Activated naive CD4-positive, alpha-beta T cell treated with anti-CD3 and anti-CD28 coated beads, Interleukin-2, amount 10 ng/mL, durations not matched to agents 7 days and 5 days (primary cell): ENCODE measurements at regions of chr3 and their contacts with region 1.

Region 1: GRCh38 chr3:181700168-181701087 is 11.3 kb upstream of the SOX2 start:
- DNase-seq: peak; percentile 67
- H3K4me3 Mint-ChIP-seq: peak overlapping the region; percentile 22
- H3K27ac Mint-ChIP-seq: peak overlapping the region; percentile 17
- H3K4me1 Mint-ChIP-seq: peaks cover 32% of the 10 kb centered on the region
- H3K27me3 Mint-ChIP-seq: peaks cover 90% of the 10 kb centered on the region

Region 2: DNA sequence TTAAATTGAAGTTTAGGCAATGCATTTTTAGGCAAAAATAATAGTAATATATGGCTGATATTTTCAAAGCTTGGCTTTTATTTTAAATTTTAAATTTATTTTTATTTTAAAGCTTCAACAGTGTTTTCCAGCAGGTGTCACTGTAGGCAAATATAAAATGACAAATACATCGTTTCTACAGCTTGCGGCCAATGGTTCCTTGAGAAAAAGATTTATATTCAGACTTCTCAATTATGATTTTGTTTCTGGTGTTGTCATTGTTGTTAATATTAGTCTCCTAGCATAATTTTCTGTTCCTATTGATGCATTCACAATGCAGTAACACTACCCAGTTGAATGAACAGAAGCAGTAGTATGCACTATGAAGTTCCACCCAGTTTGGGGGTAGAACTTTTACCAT is 490.2 kb before region 1 on chr3:
- CTCF ChIA-PET with region 1: interaction called, 18 read pairs
- DNase-seq: no peak
- H3K4me3 Mint-ChIP-seq: no peak overlapping the region
- H3K27ac Mint-ChIP-seq: no peak overlapping the region
- H3K4me1 Mint-ChIP-seq: no peaks in the 10 kb centered on the region
- H3K27me3 Mint-ChIP-seq: peaks cover 4% of the 10 kb centered on the region

Region 3: DNA sequence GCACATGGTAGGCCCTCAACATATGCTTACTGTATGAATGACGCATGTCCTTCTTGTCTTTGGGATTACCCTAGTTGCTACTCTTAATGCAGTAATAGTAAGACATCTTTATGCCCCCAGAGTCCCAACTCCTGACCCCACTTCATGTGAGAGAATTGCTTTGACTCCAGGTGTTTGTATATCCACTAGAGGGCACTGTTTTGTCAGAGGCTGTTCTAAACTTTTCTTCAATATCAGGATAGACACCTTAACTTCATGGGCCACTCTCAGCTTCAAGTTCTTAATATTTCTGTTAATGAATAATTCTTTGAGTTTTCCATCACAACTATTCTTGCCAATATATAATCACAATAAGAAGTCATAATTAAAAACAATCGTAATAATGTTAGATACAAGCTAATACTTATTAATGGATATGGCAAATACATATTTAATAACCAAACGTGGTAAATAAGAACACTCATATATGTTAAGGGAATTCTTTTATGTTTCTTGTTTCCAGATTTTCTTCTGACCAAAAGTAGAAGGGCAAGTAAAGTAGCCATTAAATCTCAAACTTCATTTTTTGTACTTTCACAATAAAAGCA is 373.7 kb before region 1 on chr3:
- CTCF ChIA-PET with region 1: interaction called, 11 read pairs
- DNase-seq: no peak
- H3K4me3 Mint-ChIP-seq: no peak overlapping the region
- H3K27ac Mint-ChIP-seq: no peak overlapping the region
- H3K4me1 Mint-ChIP-seq: no peaks in the 10 kb centered on the region
- H3K27me3 Mint-ChIP-seq: no peaks in the 10 kb centered on the region

Region 4: DNA sequence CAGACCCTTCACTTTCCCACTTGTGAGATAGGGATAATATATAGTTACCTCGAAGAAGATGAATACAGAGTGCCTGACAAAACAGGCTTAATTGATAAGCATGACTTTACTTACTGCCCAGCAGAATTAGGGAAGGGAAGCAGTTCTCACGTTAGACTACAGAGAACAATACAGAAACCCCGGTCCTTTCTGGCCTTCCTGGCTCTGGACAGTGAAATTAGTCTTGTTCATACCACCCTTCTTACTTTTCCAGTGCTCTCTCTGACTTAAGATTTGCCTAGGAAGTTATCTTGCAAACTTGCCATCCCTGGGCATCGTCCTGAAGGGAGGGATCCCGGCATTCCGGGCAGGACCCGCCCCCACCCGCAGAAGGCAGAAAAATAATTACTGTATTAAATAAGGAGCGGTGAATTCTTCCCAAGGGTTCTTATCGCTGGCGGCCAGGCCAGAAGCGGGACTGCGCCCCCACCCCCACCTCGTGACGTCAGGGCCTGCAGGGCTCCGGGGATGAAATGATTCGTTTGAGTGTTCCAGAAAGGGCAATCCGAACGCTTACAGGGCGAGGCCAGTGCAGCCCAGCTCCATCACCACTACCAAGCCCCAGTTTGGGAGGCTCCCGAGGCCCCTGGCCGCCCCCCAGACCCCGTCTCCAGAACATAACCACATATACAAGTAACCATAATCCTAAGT is 19.7 kb after region 1 on chr3:
- CTCF ChIA-PET with region 1: interaction called, 14 read pairs
- DNase-seq: no peak
- H3K4me3 Mint-ChIP-seq: no peak overlapping the region
- H3K27ac Mint-ChIP-seq: peak overlapping the region; percentile 45
- H3K4me1 Mint-ChIP-seq: no peaks in the 10 kb centered on the region
- H3K27me3 Mint-ChIP-seq: peaks cover 89% of the 10 kb centered on the region

Region 5: GRCh38 chr3:181726351-181727330 is 26.2 kb after region 1 on chr3:
- CTCF ChIA-PET with region 1: interaction called, 17 read pairs
- DNase-seq: no peak
- H3K4me3 Mint-ChIP-seq: peak overlapping the region; percentile 54
- H3K27ac Mint-ChIP-seq: peak overlapping the region; percentile 38
- H3K4me1 Mint-ChIP-seq: peaks cover 11% of the 10 kb centered on the region
- H3K27me3 Mint-ChIP-seq: peaks cover 91% of the 10 kb centered on the region